ENCODE measurements at regions of chr18 and their contacts with region 1.

Region 1: DNA sequence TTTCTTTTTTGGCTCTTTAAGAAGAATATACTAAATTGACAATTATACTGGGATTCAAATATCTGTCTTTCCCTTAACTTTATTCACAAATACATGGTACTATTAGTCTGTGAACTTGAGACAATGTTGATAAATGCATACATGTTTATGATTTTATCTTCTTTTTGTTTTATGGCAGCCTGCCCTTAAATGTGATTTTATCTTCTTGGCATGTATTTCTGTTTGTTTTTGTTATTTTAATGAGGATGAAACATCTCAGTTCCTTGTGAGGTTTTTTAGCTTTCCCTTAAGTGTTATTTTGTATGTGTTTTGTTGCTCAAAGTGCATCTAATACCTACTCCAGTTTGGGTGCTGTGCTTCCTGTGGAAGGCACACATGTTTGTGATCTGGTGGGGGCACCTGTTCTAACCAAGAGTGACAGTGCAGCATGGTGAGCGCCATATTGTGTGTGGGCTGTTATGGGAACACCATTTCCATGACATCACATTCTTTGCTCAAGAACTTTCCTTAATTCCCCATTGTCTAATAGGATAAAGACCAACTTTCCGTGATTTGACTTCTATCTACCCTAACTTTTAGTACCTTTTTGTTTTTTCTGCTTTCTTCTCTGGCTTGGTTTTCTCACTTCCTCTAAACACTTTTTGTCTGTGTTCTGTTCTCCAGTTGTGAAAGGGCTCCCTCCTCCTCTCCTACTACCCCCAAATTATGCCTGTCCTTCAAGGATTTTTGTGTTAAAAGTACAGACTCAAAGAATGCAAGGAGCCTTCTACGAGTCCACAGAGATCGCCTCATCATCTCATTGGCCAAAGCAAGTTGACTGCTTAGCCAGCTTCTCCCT is 162.1 kb upstream of the TTC39C start:
- DNase-seq: no peak
- H3K4me3 Mint-ChIP-seq: no peak overlapping the region
- H3K27ac Mint-ChIP-seq: no peak overlapping the region
- H3K4me1 Mint-ChIP-seq: peaks cover 10% of the 10 kb centered on the region
- H3K27me3 Mint-ChIP-seq: no peaks in the 10 kb centered on the region

Region 2: GRCh38 chr18:23752796-23753195 is 99.6 kb before region 1 on chr18:
- CTCF ChIA-PET with region 1: no interaction called
- POLR2A ChIA-PET with region 1: no interaction called
- DNase-seq: no peak
- H3K4me3 Mint-ChIP-seq: no peak overlapping the region
- H3K27ac Mint-ChIP-seq: no peak overlapping the region
- H3K4me1 Mint-ChIP-seq: no peaks in the 10 kb centered on the region
- H3K27me3 Mint-ChIP-seq: peaks cover 14% of the 10 kb centered on the region

Region 3: GRCh38 chr18:23837591-23837990 is 14.8 kb before region 1 on chr18:
- CTCF ChIA-PET with region 1: interaction called, 14 read pairs
- POLR2A ChIA-PET with region 1: no interaction called
- DNase-seq: no peak
- H3K4me3 Mint-ChIP-seq: no peak overlapping the region
- H3K27ac Mint-ChIP-seq: no peak overlapping the region
- H3K4me1 Mint-ChIP-seq: peaks cover 19% of the 10 kb centered on the region
- H3K27me3 Mint-ChIP-seq: no peaks in the 10 kb centered on the region